ENCODE measurements at regions of chr20 and their contacts with region 1.

Region 1: GRCh38 chr20:53547664-53548239 is 45.9 kb downstream of the ZNF217 start:
- DNase-seq: peak; percentile 95
- ATAC-seq: peak; percentile 91
- H3K4me3 ChIP-seq: no peak overlapping the region
- H3K27ac ChIP-seq: no peak overlapping the region
- H3K4me1 ChIP-seq: no peaks in the 10 kb centered on the region
- H3K27me3 ChIP-seq: no peaks in the 10 kb centered on the region
- CTCF ChIP-seq: peak; percentile 99

Region 2: GRCh38 chr20:53238121-53238660 is 309.6 kb before region 1 on chr20:
- CTCF ChIA-PET with region 1: no interaction called
- POLR2A ChIA-PET with region 1: no interaction called
- intact Hi-C with region 1: loop called (anchors 10 kb)
- DNase-seq: no peak
- ATAC-seq: no peak
- H3K4me3 ChIP-seq: no peak overlapping the region
- H3K27ac ChIP-seq: no peak overlapping the region
- H3K4me1 ChIP-seq: no peaks in the 10 kb centered on the region
- H3K27me3 ChIP-seq: peaks cover 10% of the 10 kb centered on the region
- CTCF ChIP-seq: no peak

Region 3: DNA sequence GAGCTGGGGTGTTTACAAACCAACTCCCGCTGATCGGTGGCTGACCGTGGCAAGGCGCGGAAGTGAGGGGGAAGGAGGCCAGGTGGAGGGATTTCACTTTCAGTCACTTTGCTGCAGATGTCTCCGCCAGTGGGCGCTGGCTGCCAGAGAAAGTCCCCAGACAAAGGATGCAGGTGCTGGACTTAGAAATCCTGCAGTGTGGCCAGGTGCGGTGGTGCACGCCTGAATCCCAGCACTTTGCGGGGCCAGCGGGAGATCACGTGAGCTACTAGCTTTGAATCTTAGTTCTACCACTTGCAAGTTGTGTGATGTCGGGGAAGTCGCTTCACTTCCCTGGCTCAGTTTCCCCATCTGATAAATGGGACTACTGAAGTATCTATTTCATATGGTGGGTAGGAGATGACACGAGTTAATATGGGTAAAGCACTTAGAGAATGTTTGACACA is 134.5 kb before region 1 on chr20:
- CTCF ChIA-PET with region 1: interaction called, 10 read pairs
- POLR2A ChIA-PET with region 1: no interaction called
- intact Hi-C with region 1: loop called (anchors 1 kb)
- DNase-seq: peak; percentile 67
- ATAC-seq: peak; percentile 82
- H3K4me3 ChIP-seq: no peak overlapping the region
- H3K27ac ChIP-seq: no peak overlapping the region
- H3K4me1 ChIP-seq: no peaks in the 10 kb centered on the region
- H3K27me3 ChIP-seq: peaks cover 21% of the 10 kb centered on the region; the same call in 1 of the 2 replicates
- CTCF ChIP-seq: peak; percentile 82

Measured in PC-3 (cell line).